CD8-positive, alpha-beta T cell (primary cell): ENCODE measurements at regions of chr17 and their contacts with region 1.

Region 1: DNA sequence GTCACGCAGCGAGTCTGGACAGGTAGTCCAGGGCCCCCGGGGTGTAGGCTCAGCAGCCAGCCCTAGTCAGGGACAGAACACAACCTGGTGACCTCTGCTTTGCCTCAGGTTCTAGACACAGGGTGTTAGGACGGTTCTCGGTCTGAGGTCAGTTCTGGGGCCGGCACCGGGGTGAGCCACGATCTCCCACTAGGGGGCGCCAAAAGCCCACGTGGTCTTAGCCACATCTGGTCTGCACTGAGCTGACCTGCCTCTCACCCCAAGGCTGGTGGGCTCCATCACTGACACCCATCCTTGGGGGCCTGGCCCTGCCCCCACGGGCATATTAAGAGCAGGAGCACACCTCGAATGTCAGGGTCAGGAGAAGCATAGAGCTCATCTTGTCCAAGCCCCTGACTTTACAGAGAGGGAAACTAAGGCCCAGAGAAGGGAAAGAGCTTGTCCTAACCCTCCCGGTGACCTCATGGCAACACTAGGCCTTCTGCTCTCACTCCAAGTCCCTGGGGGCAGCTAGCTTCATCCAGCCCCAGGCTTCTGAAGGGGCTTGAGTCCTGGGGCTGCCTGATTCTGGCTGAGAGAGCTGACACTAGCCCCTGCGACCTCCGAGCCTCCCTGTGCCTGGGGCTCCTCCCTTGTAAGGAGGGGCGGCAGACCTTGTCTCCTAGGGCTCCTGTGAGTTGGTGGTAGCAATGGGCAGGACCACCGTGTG is 9.0 kb downstream of the SLC5A10 start:
- DNase-seq: peak; percentile 44 to 89 (median 77)
- ATAC-seq: peak; percentile 85
- H3K4me3 ChIP-seq: no peak overlapping the region
- H3K4me3 Mint-ChIP-seq: no peak overlapping the region
- H3K27ac ChIP-seq: no peak overlapping the region
- H3K27ac Mint-ChIP-seq: no peak overlapping the region
- H3K4me1 ChIP-seq: peaks cover 20% of the 10 kb centered on the region
- H3K4me1 Mint-ChIP-seq: peaks cover 28% of the 10 kb centered on the region
- H3K27me3 ChIP-seq: no peaks in the 10 kb centered on the region
- H3K27me3 Mint-ChIP-seq: no peaks in the 10 kb centered on the region
- CTCF ChIP-seq: peak; percentile 88

Region 2: GRCh38 chr17:18866866-18867813 is 93.8 kb before region 1 on chr17:
- CTCF ChIA-PET with region 1: interaction called, 11 read pairs
- POLR2A ChIA-PET with region 1: no interaction called
- intact Hi-C with region 1: no loop called
- DNase-seq: no peak
- ATAC-seq: no peak
- H3K4me3 ChIP-seq: no peak overlapping the region
- H3K4me3 Mint-ChIP-seq: no peak overlapping the region
- H3K27ac ChIP-seq: no peak overlapping the region
- H3K27ac Mint-ChIP-seq: peak overlapping the region; percentile 66
- H3K4me1 ChIP-seq: no peaks in the 10 kb centered on the region
- H3K4me1 Mint-ChIP-seq: peaks cover 15% of the 10 kb centered on the region
- H3K27me3 ChIP-seq: no peaks in the 10 kb centered on the region
- H3K27me3 Mint-ChIP-seq: no peaks in the 10 kb centered on the region
- CTCF ChIP-seq: no peak

Region 3: GRCh38 chr17:18974407-18975132 is 13.6 kb after region 1 on chr17:
- CTCF ChIA-PET with region 1: interaction called, 16 read pairs
- POLR2A ChIA-PET with region 1: no interaction called
- intact Hi-C with region 1: no loop called
- DNase-seq: no peak
- ATAC-seq: no peak
- H3K4me3 ChIP-seq: no peak overlapping the region
- H3K4me3 Mint-ChIP-seq: no peak overlapping the region
- H3K27ac ChIP-seq: no peak overlapping the region
- H3K27ac Mint-ChIP-seq: no peak overlapping the region
- H3K4me1 ChIP-seq: no peaks in the 10 kb centered on the region
- H3K4me1 Mint-ChIP-seq: peaks cover 3% of the 10 kb centered on the region
- H3K27me3 ChIP-seq: no peaks in the 10 kb centered on the region
- H3K27me3 Mint-ChIP-seq: no peaks in the 10 kb centered on the region
- CTCF ChIP-seq: no peak

Region 4: GRCh38 chr17:19000531-19001325 is 39.8 kb after region 1 on chr17:
- CTCF ChIA-PET with region 1: interaction called, 16 read pairs
- POLR2A ChIA-PET with region 1: no interaction called
- intact Hi-C with region 1: no loop called
- DNase-seq: no peak
- ATAC-seq: no peak
- H3K4me3 ChIP-seq: no peak overlapping the region
- H3K4me3 Mint-ChIP-seq: no peak overlapping the region
- H3K27ac ChIP-seq: no peak overlapping the region
- H3K27ac Mint-ChIP-seq: no peak overlapping the region
- H3K4me1 ChIP-seq: peaks cover 30% of the 10 kb centered on the region
- H3K4me1 Mint-ChIP-seq: peaks cover 29% of the 10 kb centered on the region
- H3K27me3 ChIP-seq: no peaks in the 10 kb centered on the region
- H3K27me3 Mint-ChIP-seq: no peaks in the 10 kb centered on the region
- CTCF ChIP-seq: no peak